ENCODE measurements at regions of chr6 and their contacts with region 1.

Region 1: GRCh38 chr6:118776607-118777549 is 117.1 kb upstream of the ASF1A start:
- DNase-seq: peak; percentile 55 to 74 (median 62)
- H3K4me3 ChIP-seq: no peak overlapping the region
- H3K4me3 Mint-ChIP-seq: no peak overlapping the region
- H3K27ac ChIP-seq: no peak overlapping the region
- H3K27ac Mint-ChIP-seq: peak overlapping the region in 1 of 7 donors; percentile 25
- H3K4me1 ChIP-seq: peaks cover 29 to 33% of the 10 kb centered on the region in 2 donors
- H3K4me1 Mint-ChIP-seq: peaks cover 40% of the 10 kb centered on the region
- H3K27me3 ChIP-seq: no peaks in the 10 kb centered on the region
- H3K27me3 Mint-ChIP-seq: peaks cover 0 to 2% (median 0%) of the 10 kb centered on the region in 3 donors
- CTCF ChIP-seq: peak; percentile 78

Region 2: GRCh38 chr6:118651282-118652050 is 125.4 kb before region 1 on chr6 and contains the start of gene CEP85L:
- intact Hi-C with region 1: loop called (anchors 5 to 10 kb)
- DNase-seq: peak; percentile 74 to 85 (median 79)
- H3K4me3 ChIP-seq: peak within 1 kb of the TSS; percentile 79 to 93 (median 85)
- H3K4me3 Mint-ChIP-seq: peak within 1 kb of the TSS; percentile 91 to 94
- H3K27ac ChIP-seq: peak within 1 kb of the TSS; percentile 66 to 87
- H3K27ac Mint-ChIP-seq: peak within 1 kb of the TSS; percentile 77 to 95 (median 92)
- H3K4me1 ChIP-seq: peaks cover 18 to 32% of the 10 kb centered on the region in 2 donors
- H3K4me1 Mint-ChIP-seq: peaks cover 25% of the 10 kb centered on the region
- H3K27me3 ChIP-seq: no peaks in the 10 kb centered on the region
- H3K27me3 Mint-ChIP-seq: peaks cover 2 to 3% (median 3%) of the 10 kb centered on the region in 3 donors
- CTCF ChIP-seq: peak; percentile 30
- polyA plus RNA-seq, gene CEP85L: 14.9 to 38.3 (median 19.6) TPM

Measured in CD14-positive monocyte (primary cell).